ENCODE measurements at regions of chr17 and their contacts with region 1.

Region 1: GRCh38 chr17:39946551-39947330 is 16.1 kb upstream of the GSDMA start:
- DNase-seq: peak; percentile 86
- H3K4me3 Mint-ChIP-seq: no peak overlapping the region
- H3K27ac Mint-ChIP-seq: no peak overlapping the region
- H3K4me1 Mint-ChIP-seq: peaks cover 39% of the 10 kb centered on the region
- H3K27me3 Mint-ChIP-seq: peaks cover 57% of the 10 kb centered on the region
- CTCF ChIP-seq: no peak

Region 2: GRCh38 chr17:39553341-39553945 is 393.3 kb before region 1 on chr17:
- CTCF ChIA-PET with region 1: no interaction called
- intact Hi-C with region 1: no loop called
- DNase-seq: no peak
- H3K4me3 Mint-ChIP-seq: no peak overlapping the region
- H3K27ac Mint-ChIP-seq: no peak overlapping the region
- H3K4me1 Mint-ChIP-seq: no peaks in the 10 kb centered on the region
- H3K27me3 Mint-ChIP-seq: no peaks in the 10 kb centered on the region
- CTCF ChIP-seq: no peak

Region 3: DNA sequence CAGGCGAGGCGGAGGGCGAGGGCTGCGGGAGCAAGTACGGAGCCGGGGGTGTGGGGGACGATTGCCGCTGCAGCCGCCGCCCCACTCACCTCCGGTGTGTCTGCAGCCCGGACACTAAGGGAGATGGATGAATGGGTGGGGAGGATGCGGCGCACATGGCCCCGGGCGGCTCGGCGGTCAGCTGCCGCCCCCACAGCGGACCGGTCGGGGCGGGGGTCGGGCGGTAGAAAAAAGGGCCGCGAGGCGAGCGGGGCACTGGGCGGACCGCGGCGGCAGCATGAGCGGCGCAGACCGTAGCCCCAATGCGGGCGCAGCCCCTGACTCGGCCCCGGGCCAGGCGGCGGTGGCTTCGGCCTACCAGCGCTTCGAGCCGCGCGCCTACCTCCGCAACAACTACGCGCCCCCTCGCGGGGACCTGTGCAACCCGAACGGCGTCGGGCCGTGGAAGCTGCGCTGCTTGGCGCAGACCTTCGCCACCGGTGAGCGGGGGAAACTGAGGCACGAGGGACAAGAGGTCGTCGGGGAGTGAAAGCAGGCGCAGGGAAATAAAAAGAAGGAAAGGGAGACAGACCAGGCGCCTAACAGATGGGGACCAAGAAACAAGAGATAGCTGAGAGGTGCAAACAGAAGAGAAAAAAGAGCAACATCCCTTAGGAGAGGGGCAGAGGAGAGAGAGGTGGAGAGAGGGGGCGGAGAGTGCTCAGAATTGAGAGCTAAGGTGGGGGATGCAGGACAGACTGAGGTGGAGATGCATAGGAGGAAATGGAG is 278.4 kb before region 1 on chr17 and contains the start of gene PNMT:
- CTCF ChIA-PET with region 1: interaction called, 8,195 read pairs
- intact Hi-C with region 1: loop called (anchors 1 kb)
- DNase-seq: peak; percentile 100
- H3K4me3 Mint-ChIP-seq: peak within 1 kb of the TSS; percentile 24
- H3K27ac Mint-ChIP-seq: peak within 1 kb of the TSS; percentile 0
- H3K4me1 Mint-ChIP-seq: peaks cover 65% of the 10 kb centered on the region
- H3K27me3 Mint-ChIP-seq: peaks cover 69% of the 10 kb centered on the region
- CTCF ChIP-seq: no peak
- total RNA-seq, gene PNMT: 1.3 and 3.2 TPM in 2 replicates

Region 4: GRCh38 chr17:39722965-39723848 is 223.5 kb before region 1 on chr17:
- CTCF ChIA-PET with region 1: interaction called, 1,335 read pairs
- intact Hi-C with region 1: no loop called
- DNase-seq: peak; percentile 75
- H3K4me3 Mint-ChIP-seq: peak overlapping the region; percentile 0
- H3K27ac Mint-ChIP-seq: peak overlapping the region; percentile 28
- H3K4me1 Mint-ChIP-seq: peaks cover 38% of the 10 kb centered on the region
- H3K27me3 Mint-ChIP-seq: no peaks in the 10 kb centered on the region
- CTCF ChIP-seq: no peak

Region 5: GRCh38 chr17:39787743-39788484 is 158.8 kb before region 1 on chr17:
- CTCF ChIA-PET with region 1: interaction called, 171 read pairs
- intact Hi-C with region 1: no loop called
- DNase-seq: peak; percentile 80
- H3K4me3 Mint-ChIP-seq: no peak overlapping the region
- H3K27ac Mint-ChIP-seq: no peak overlapping the region
- H3K4me1 Mint-ChIP-seq: peaks cover 29% of the 10 kb centered on the region
- H3K27me3 Mint-ChIP-seq: no peaks in the 10 kb centered on the region
- CTCF ChIP-seq: no peak

Region 6: GRCh38 chr17:40474419-40475002 is 527.8 kb after region 1 on chr17:
- CTCF ChIA-PET with region 1: interaction called, 15 read pairs
- intact Hi-C with region 1: no loop called
- DNase-seq: no peak
- H3K4me3 Mint-ChIP-seq: no peak overlapping the region
- H3K27ac Mint-ChIP-seq: no peak overlapping the region
- H3K4me1 Mint-ChIP-seq: no peaks in the 10 kb centered on the region
- H3K27me3 Mint-ChIP-seq: peaks cover 65% of the 10 kb centered on the region
- CTCF ChIP-seq: no peak